Gastrocnemius medialis (tissue), 4 donors: ENCODE measurements at regions of chr2 and their contacts with region 1.

Region 1: DNA sequence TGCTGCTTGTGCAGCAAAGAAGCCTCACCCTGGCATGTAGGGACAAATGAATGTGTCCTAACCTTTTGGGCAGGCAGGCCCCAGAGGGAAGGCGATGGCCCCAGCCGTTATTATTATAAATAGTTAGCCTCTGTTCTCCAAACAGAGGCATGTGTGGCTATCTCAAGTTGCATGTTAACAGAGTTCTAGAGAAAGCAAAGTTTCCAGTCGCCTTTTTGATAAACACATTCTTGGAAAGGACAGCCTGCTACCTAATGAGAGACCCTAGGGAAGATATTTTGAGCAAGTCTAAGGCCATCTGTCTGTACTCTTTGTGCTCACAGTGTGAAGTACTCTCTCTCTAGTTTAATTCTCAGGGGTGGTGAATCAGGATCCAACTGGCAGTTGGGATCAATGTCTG is 97.4 kb upstream of the FHL2 start:
- DNase-seq: peak in 1 of 2 donors; percentile 44
- ATAC-seq: peak; percentile 77 to 89
- H3K4me3 ChIP-seq: no peak overlapping the region
- H3K27ac ChIP-seq: peak overlapping the region; percentile 66 to 81 (median 78)
- H3K4me1 ChIP-seq: peaks cover 42 to 46% of the 10 kb centered on the region in 2 donors
- H3K27me3 ChIP-seq: peaks cover 0 to 2% (median 0%) of the 10 kb centered on the region in 3 donors
- CTCF ChIP-seq: no peak
- POLR2A ChIP-seq: no peak

Region 2: GRCh38 chr2:105379741-105380186 is 116.5 kb before region 1 on chr2:
- in situ Hi-C with region 1: no loop called
- intact Hi-C with region 1: loop called (anchors 5 kb)
- DNase-seq: peak in 1 of 2 donors; percentile 66
- ATAC-seq: peak; percentile 57 to 66
- H3K4me3 ChIP-seq: no peak overlapping the region
- H3K27ac ChIP-seq: peak overlapping the region; percentile 61 to 81 (median 71)
- H3K4me1 ChIP-seq: peaks cover 89 to 94% of the 10 kb centered on the region in 2 donors
- H3K27me3 ChIP-seq: no peaks in the 10 kb centered on the region
- CTCF ChIP-seq: no peak
- POLR2A ChIP-seq: no peak

Region 3: DNA sequence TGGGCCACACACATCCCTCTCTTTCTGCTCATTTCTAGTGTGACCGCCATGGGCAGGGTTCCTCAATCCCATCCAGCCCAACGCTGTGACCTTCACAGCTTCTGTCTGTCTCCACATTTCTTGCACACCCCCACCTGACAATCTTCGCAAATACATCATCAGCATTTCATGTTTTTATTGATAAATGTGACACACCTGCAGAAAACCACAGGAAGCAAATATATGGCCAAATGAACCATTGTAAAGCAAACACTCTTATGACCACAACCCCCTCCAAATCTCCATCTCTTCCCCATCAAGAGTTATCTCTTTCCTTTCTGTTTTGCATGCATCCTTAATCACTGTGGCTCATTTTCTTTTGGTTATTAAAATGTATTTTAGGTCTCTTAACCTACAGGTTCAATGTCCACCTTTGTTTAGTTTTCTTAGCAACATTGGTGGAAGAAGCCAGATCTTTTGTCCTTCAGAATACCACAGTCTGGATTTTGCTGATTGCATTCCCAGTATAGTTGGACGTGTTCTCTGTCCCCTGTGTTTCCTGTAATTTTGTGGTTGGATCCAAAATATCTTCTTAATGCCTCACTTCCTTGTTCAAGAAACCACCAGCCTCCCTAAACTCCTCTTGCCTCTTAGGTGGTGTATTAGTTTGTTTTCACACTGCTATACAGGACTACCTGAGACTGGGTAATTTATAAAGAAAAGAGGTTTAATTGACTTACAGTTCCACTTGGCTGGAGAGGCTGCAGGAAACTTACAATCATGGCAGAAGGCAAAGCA is 238.7 kb after region 1 on chr2:
- in situ Hi-C with region 1: no loop called
- intact Hi-C with region 1: no loop called
- DNase-seq: no peak
- ATAC-seq: no peak
- H3K4me3 ChIP-seq: no peak overlapping the region
- H3K27ac ChIP-seq: no peak overlapping the region
- H3K4me1 ChIP-seq: peaks cover 0 to 4% of the 10 kb centered on the region in 2 donors
- H3K27me3 ChIP-seq: no peaks in the 10 kb centered on the region
- CTCF ChIP-seq: no peak
- POLR2A ChIP-seq: no peak